Calu3 (cell line): ENCODE measurements at regions of chr19 and their contacts with region 1.

Region 1: GRCh38 chr19:44770550-44771257 is 7.0 kb upstream of the CBLC start:
- DNase-seq: peak; percentile 99
- H3K4me3 Mint-ChIP-seq: no peak overlapping the region
- H3K27ac Mint-ChIP-seq: peak overlapping the region; percentile 31
- H3K4me1 Mint-ChIP-seq: peaks cover 37% of the 10 kb centered on the region
- H3K27me3 Mint-ChIP-seq: no peaks in the 10 kb centered on the region
- CTCF ChIP-seq: peak; percentile 87

Region 2: DNA sequence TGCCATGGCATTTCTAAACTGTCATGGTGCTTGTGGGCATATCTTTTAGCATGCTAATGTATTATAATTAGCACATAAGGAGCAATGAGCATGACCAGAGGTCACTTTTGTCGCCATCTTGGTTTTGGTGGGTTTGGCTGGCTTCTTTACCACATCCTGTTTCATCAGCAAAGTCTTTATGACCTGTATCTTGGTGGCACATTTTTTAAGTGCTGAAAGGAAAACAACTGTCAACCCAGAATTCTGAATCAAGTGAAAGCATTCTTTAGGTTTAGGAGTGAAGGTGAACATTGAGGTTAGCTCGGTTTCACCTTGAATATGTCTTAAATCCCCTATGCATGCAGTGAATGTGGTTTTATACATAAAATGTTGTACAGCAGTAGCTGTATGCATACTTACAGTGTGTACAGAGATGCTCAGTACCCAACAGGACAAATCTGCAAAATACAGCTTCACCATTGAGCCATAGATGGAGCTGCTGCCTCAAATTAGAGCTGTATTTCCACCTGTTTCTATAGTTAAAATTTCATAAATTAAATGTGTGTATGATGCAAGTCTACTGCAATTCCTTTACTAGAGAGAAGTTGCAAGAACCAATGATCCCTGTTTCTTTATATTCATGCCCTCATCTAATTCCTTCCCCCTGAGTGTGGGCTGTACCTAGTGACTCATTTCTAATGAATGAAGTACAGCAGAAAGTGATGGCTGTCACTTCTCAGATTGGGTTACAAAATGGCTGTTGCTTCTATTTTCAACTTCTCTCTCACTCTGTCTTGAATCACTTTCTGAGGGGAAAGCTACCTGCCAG is 182.5 kb before region 1 on chr19:
- CTCF ChIA-PET with region 1: interaction called, 5 read pairs
- intact Hi-C with region 1: loop called (anchors 5 kb)
- DNase-seq: peak; percentile 68
- H3K4me3 Mint-ChIP-seq: peak overlapping the region; percentile 59
- H3K27ac Mint-ChIP-seq: peak overlapping the region; percentile 100
- H3K4me1 Mint-ChIP-seq: peaks cover 75% of the 10 kb centered on the region
- H3K27me3 Mint-ChIP-seq: no peaks in the 10 kb centered on the region
- CTCF ChIP-seq: peak; percentile 19

Region 3: DNA sequence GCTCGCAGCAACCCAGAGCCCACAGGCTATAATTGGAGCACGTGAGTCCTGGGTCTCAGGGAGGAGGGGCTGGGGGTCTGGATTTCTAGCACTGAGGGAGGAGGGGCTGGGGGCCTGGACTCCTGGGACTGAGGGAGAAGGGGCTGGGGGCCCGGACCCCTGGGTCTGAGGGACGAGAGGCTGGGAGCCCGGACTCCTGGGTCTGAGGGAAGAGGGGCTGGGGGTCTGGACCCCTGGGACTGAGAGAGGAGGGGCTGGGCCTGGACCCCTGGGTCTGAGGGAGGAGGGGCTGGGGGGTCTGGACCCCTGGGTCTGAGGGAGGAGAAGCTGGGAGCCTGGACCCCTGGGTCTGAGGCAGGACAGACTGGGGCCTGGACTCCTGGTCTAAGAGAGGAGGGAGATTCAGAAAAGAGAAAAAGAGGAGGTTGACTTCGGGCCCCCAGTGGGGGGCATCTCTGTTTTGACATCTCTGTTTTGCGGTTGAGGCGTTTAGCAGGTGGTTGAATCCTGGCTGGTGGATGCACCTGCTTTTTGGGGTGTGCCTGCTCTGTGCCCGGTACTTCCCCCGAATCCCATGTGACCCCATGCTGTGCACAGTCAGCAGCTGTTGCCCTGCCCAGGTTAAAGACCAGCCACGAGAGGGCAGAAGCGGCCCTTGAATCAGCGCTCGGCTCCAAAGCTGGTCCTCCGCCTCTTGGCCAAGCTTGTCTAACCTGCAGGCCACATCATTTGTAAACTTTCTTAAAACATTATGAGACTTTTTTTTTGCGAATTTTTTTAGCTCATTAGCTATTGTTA is 116.5 kb before region 1 on chr19:
- CTCF ChIA-PET with region 1: interaction called, 15 read pairs
- intact Hi-C with region 1: no loop called
- DNase-seq: peak; percentile 91
- H3K4me3 Mint-ChIP-seq: peak overlapping the region; percentile 33
- H3K27ac Mint-ChIP-seq: peak overlapping the region; percentile 43
- H3K4me1 Mint-ChIP-seq: peaks cover 73% of the 10 kb centered on the region
- H3K27me3 Mint-ChIP-seq: no peaks in the 10 kb centered on the region
- CTCF ChIP-seq: peak; percentile 88

Region 4: GRCh38 chr19:44689056-44689895 is 81.4 kb before region 1 on chr19:
- CTCF ChIA-PET with region 1: interaction called, 27 read pairs
- intact Hi-C with region 1: loop called (anchors 1 kb)
- DNase-seq: peak; percentile 91
- H3K4me3 Mint-ChIP-seq: no peak overlapping the region
- H3K27ac Mint-ChIP-seq: peak overlapping the region; percentile 14
- H3K4me1 Mint-ChIP-seq: peaks cover 62% of the 10 kb centered on the region
- H3K27me3 Mint-ChIP-seq: no peaks in the 10 kb centered on the region
- CTCF ChIP-seq: peak; percentile 99

Region 5: GRCh38 chr19:44741841-44742352 is 28.8 kb before region 1 on chr19:
- CTCF ChIA-PET with region 1: interaction called, 15 read pairs
- intact Hi-C with region 1: loop called (anchors 5 kb)
- DNase-seq: peak; percentile 99
- H3K4me3 Mint-ChIP-seq: peak overlapping the region; percentile 56
- H3K27ac Mint-ChIP-seq: peak overlapping the region; percentile 91
- H3K4me1 Mint-ChIP-seq: peaks cover 74% of the 10 kb centered on the region
- H3K27me3 Mint-ChIP-seq: no peaks in the 10 kb centered on the region
- CTCF ChIP-seq: no peak

Region 6: GRCh38 chr19:44752816-44753618 is 17.7 kb before region 1 on chr19:
- CTCF ChIA-PET with region 1: interaction called, 20 read pairs
- intact Hi-C with region 1: no loop called
- DNase-seq: peak; percentile 97
- H3K4me3 Mint-ChIP-seq: peak overlapping the region; percentile 67
- H3K27ac Mint-ChIP-seq: peak overlapping the region; percentile 93
- H3K4me1 Mint-ChIP-seq: peaks cover 64% of the 10 kb centered on the region
- H3K27me3 Mint-ChIP-seq: no peaks in the 10 kb centered on the region
- CTCF ChIP-seq: no peak